ENCODE measurements at regions of chr22 and their contacts with region 1.

Region 1: GRCh38 chr22:38513063-38513462 is 7.0 kb upstream of the DDX17 start:
- DNase-seq: no peak
- H3K4me3 ChIP-seq: no peak overlapping the region
- H3K27ac ChIP-seq: no peak overlapping the region
- H3K4me1 ChIP-seq: no peaks in the 10 kb centered on the region
- H3K27me3 ChIP-seq: no peaks in the 10 kb centered on the region
- CTCF ChIP-seq: peak in 1 of 6 experiments; percentile 8
- POLR2A ChIP-seq: no peak

Region 2: GRCh38 chr22:38114484-38115398 is 398.3 kb before region 1 on chr22:
- intact Hi-C with region 1: no loop called
- DNase-seq: peak; percentile 79 to 95 (median 89)
- H3K4me3 ChIP-seq: no peak overlapping the region
- H3K27ac ChIP-seq: no peak overlapping the region
- H3K4me1 ChIP-seq: peaks cover 0 to 7% of the 10 kb centered on the region in 2 donors
- H3K27me3 ChIP-seq: no peaks in the 10 kb centered on the region
- CTCF ChIP-seq: peak; percentile 80 to 97 (median 90)
- POLR2A ChIP-seq: no peak

Region 3: DNA sequence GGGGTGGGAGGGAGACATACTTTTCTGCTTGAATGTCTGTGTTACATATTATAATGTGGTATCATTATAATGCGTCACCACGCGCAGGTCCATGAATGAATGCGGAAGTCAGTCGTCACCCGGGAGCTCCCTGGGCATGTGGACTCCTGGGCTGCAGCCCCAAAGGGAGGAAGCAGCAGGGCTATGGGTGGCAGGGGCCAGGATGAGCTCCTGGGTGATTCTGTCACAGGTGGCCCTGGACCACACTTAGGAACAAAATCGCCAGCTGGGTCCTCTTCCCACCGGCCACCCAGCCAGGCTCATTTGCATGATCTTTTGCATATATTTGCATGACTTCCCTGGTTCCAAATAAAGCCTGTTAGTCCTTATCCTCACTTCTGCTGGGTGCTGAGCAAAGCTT is 109.3 kb before region 1 on chr22:
- intact Hi-C with region 1: no loop called
- DNase-seq: peak in 1 of 7 donors; percentile 48
- H3K4me3 ChIP-seq: no peak overlapping the region
- H3K27ac ChIP-seq: no peak overlapping the region
- H3K4me1 ChIP-seq: peaks cover 0 to 3% of the 10 kb centered on the region in 2 donors
- H3K27me3 ChIP-seq: no peaks in the 10 kb centered on the region
- CTCF ChIP-seq: no peak
- POLR2A ChIP-seq: no peak

Region 4: DNA sequence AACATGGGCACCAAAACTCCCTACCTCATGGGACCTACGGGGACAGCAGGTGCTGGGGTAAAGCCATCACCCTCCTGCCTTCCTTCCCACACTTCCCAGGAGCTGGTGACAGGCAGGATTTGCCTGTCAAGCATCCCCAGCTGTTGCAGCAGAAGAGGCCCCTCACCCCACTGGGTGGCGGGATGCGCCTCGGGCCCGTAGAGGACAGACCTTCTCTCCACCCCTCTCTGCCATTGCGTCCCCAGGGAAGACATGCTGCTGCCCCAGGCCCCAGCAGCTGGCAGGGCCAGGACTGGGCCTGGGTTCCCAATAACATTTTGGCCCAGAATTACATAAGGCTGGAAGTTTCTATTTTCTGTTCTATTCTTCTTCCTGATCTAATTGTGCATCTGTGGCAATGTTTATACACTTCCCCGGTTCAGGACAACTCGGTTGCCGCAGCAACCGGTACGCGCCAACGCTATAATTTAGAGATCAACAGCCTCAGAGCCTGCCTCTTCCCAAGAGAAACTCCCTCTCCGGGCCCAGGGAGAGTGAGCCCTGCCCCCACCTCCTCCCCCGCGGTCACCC is 83.5 kb before region 1 on chr22:
- intact Hi-C with region 1: no loop called
- DNase-seq: no peak
- H3K4me3 ChIP-seq: no peak overlapping the region
- H3K27ac ChIP-seq: no peak overlapping the region
- H3K4me1 ChIP-seq: no peaks in the 10 kb centered on the region
- H3K27me3 ChIP-seq: no peaks in the 10 kb centered on the region
- CTCF ChIP-seq: no peak
- POLR2A ChIP-seq: no peak

Region 5: DNA sequence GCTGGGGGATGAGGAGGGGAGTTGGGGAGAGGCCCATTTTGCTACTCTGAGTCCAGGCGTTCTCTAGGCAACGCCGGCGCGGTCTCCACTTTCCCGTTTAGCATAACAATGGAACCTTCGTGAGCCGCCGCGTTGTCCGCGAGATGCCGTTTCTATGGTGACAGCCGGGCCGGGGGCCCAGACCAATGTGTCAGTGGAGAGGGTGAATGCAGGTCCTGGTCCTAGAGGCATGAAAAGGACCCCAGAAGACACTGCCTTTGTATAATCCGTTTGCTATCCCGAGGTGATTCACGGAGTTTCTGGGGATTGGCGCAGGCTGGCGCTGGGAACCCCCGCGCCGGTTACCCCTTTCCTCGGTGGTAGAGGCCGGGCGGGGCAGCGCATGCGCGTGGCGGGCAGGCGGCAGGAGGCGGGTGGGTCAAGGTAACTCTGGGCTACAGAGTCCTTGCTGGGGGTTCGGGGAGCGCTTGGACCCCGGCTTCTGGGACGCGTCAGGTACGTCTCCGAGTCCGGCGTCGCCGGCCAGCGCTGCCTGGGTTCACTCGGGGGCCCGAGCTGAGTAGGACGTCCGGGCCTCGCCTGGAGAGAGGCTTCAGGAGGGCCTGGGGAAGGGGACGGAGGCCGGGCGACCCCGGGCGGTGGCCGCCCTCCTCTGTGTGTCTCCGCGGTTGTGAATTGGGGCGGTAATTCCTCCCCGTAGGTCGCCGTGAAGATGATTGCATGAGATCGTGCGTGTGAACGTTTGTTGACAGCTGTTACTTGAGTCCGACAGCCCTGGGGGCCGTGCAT is 143.4 kb after region 1 on chr22 and contains the starts of genes CBY1 and FAM227A:
- intact Hi-C with region 1: loop called in 1 of 2 experiments (anchors 10 kb)
- DNase-seq: peak; percentile 86 to 93 (median 89)
- H3K4me3 ChIP-seq: peak within 1 kb of the TSS; percentile 71 to 94 (median 77)
- H3K27ac ChIP-seq: peak within 1 kb of the TSS; percentile 50 to 93 (median 91)
- H3K4me1 ChIP-seq: peaks cover 0 to 16% of the 10 kb centered on the region in 2 donors
- H3K27me3 ChIP-seq: no peaks in the 10 kb centered on the region
- CTCF ChIP-seq: peak in 1 of 6 experiments; percentile 7
- POLR2A ChIP-seq: no peak
- total RNA-seq, gene CBY1: 23.8 to 60.9 (median 42.9) TPM
- total RNA-seq, gene FAM227A: 0.43 to 2.3 (median 0.83) TPM

Region 6: DNA sequence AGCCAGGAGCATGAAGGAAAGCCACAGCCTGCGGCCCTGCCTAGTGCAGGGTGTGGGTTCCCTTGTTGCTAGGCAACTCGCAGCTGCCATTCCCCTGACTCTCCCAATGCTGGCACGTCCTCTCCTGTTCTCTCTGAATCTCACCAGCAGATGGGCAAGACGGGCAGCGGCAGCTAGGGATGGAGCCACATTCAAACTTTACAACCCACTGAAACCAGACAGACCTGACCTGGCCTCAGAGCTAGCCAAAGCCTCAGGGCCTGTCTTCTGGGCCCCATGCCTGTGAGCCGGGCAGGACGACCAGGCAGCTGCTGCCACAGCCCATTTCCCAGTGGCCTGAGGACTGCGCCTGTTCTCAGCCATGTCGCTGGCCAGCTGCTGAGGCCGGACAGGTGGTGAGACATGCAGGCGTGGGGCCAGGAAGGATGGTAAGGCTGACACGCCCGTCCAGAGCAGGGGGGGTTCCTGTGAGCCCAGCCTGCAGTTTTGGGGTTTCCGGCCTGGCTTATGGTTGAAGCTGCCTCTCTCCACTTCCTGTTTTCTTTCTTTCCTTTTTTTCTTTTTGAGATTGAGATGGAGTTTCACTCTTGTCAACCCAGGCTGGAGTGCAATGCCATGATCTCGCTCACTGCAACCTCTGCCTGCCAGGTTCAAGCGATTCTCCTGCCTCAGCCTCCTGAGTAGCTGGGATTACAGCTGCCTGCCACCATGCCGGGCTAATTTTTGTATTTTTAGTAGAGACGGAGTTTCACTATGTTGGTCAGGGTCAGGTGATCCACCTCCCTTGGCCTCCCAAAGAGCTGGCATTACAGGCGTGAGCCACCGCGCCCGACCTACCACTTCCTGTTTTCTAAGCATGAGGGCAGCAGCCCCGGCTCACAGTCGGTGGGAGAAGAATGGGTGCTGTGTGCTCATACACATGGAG is 238.6 kb after region 1 on chr22:
- intact Hi-C with region 1: no loop called
- DNase-seq: peak in 2 of 7 donors; percentile 41 to 59
- H3K4me3 ChIP-seq: no peak overlapping the region
- H3K27ac ChIP-seq: peak overlapping the region in 2 of 5 donors; percentile 23 to 46
- H3K4me1 ChIP-seq: peaks cover 25 to 33% of the 10 kb centered on the region in 2 donors
- H3K27me3 ChIP-seq: no peaks in the 10 kb centered on the region
- CTCF ChIP-seq: no peak
- POLR2A ChIP-seq: no peak

Measured in adrenal gland (tissue), 19 donors.